CD14-positive monocyte (primary cell): ENCODE measurements at regions of chr12 and their contacts with region 1.

Region 1: GRCh38 chr12:131454418-131455217 is 256.3 kb upstream of the SFSWAP start:
- DNase-seq: peak in 1 of 3 donors; percentile 7
- H3K4me3 ChIP-seq: no peak overlapping the region
- H3K4me3 Mint-ChIP-seq: no peak overlapping the region
- H3K27ac ChIP-seq: no peak overlapping the region
- H3K27ac Mint-ChIP-seq: peak overlapping the region in 2 of 7 donors; percentile 32 to 60
- H3K4me1 ChIP-seq: no peaks in the 10 kb centered on the region
- H3K4me1 Mint-ChIP-seq: peaks cover 9% of the 10 kb centered on the region
- H3K27me3 ChIP-seq: no peaks in the 10 kb centered on the region
- H3K27me3 Mint-ChIP-seq: peaks cover 4 to 9% (median 5%) of the 10 kb centered on the region in 3 donors
- CTCF ChIP-seq: peak; percentile 81

Region 2: GRCh38 chr12:131104463-131105350 is 349.9 kb before region 1 on chr12:
- intact Hi-C with region 1: loop called in 1 of 2 experiments (anchors 10 kb)
- DNase-seq: peak; percentile 55 to 68 (median 58)
- H3K4me3 ChIP-seq: no peak overlapping the region
- H3K4me3 Mint-ChIP-seq: no peak overlapping the region
- H3K27ac ChIP-seq: no peak overlapping the region
- H3K27ac Mint-ChIP-seq: peak overlapping the region in 1 of 7 donors; percentile 70
- H3K4me1 ChIP-seq: peaks cover 43% of the 10 kb centered on the region in 2 donors
- H3K4me1 Mint-ChIP-seq: peaks cover 34% of the 10 kb centered on the region
- H3K27me3 ChIP-seq: peaks cover 0 to 12% of the 10 kb centered on the region in 2 donors
- H3K27me3 Mint-ChIP-seq: peaks cover 7 to 11% (median 9%) of the 10 kb centered on the region in 3 donors
- CTCF ChIP-seq: peak; percentile 84

Region 3: DNA sequence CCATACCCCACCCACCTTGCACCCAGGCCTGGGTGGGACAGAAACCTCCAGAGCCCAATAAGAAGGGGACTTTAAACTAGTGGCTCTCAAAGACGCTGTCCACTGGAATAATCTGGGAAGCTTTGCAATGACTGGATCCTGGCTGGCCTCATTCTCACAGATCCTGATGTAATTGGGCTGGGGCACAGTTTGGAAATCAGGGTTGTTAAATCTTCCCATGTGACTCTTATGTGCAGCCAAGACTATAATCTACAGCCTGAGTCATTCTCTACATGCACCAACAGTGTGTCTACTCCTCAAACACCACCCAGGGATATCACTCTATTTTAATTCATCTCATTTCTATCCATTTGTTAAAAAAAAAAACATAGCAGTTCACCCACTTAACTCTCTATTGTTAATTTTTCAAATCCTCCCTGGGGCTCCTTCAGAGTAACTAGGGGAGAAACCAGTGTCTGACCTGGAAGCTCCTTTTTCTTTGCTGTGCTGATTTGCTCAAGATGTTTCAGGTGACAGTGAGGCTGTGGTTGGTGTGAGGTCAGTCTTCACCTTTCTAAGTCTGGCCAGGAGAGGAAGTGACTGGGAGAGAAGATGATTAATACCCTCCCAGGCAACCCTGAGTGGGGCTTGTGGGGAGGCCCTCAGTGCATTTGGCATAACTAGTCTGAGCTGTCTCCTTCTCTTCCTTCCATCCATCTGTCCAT is 44.7 kb after region 1 on chr12:
- intact Hi-C with region 1: no loop called
- DNase-seq: no peak
- H3K4me3 ChIP-seq: no peak overlapping the region
- H3K4me3 Mint-ChIP-seq: no peak overlapping the region
- H3K27ac ChIP-seq: no peak overlapping the region
- H3K27ac Mint-ChIP-seq: no peak overlapping the region
- H3K4me1 ChIP-seq: no peaks in the 10 kb centered on the region
- H3K4me1 Mint-ChIP-seq: no peaks in the 10 kb centered on the region
- H3K27me3 ChIP-seq: no peaks in the 10 kb centered on the region
- H3K27me3 Mint-ChIP-seq: peaks cover 0 to 2% (median 2%) of the 10 kb centered on the region in 3 donors
- CTCF ChIP-seq: no peak